Activated CD4-positive, alpha-beta T cell treated with anti-CD3 and anti-CD28 coated beads for 36 hours (primary cell): ENCODE measurements at regions of chr11 and their contacts with region 1.

Region 1: DNA sequence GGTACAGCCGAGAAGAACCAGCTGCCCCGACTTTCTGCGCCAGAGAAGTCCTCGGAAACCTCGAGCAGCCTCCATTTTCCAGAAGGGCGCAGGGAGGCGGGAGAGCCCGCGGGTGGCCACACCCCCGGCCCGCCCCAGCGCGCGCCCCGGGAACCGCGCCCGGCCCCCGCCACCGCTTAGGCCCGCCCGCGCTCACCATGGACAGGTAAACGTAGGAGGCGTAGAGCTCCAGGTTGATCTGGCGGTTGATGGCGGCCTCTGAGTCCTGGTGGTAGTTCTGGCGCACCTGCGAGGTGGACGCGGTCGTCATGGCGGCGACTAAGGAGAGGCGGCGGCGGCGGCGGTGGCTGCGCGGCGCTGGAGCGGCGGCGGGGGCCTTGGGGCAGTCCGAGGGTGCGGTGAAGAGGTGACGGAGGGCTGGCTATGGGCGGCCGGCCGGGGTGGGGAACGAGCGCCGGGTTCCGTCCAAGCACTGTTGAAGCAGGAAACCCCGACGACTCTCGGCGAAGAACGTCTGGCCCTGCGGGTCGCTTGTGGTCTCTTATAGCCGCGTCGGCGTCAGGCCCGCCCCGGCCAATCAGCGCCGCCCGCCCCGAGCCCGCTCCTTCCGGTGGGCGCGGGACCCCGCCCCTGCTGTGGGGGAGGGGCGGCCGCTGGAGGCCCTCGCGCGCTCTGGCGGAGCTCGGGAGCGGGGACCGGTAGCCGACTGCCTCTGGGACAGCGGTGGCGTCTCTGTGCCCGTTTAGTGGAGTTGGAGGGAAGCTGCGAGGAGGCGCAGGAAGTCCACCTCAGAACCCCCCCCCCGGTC is at the start of gene FTH1:
- DNase-seq: peak; percentile 93
- ATAC-seq: peak; percentile 76
- H3K4me3 Mint-ChIP-seq: peak within 1 kb of the TSS; percentile 91
- H3K27ac Mint-ChIP-seq: peak within 1 kb of the TSS; percentile 92
- H3K4me1 Mint-ChIP-seq: peaks cover 63% of the 10 kb centered on the region
- H3K27me3 Mint-ChIP-seq: no peaks in the 10 kb centered on the region
- total RNA-seq, gene FTH1: 777 to 914 TPM

Region 2: DNA sequence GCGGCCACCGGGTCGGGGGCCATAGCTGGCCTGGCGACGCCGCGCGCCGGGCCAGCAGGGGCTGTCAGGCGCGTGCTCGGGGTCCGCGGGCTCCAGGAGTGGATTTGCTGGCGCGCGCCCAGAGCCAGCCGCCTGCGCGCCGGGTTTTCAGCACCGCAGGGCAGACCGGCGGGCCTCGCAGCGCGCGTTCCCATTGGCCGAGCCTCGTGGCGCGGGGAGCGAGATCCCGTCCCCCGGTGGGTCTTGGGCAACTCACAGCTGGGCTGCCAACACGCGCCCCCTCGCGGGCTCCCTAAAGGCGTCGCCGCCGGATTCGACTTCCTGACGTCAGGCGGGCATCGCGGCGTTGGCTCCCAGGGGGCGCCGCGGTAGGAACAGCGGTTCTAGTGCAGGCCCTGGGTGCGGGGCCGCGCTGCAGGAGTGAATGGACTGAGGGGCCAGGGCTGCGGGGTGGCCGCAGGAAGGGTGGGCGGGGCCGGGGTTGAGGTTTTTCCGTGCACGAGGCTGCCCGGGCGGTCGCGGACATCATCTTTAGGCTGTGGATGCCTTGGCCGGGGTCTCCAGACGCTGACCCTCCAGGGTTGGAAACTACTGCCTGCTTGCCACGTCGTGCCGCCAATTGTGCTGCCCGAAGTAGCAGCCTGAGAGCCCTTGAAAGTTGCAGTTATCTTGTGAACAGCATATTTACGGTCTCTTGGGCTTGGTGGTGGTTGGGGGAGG is 150.4 kb before region 1 on chr11 and contains the start of gene FADS1:
- CTCF ChIA-PET with region 1: interaction called, 4 read pairs
- POLR2A ChIA-PET with region 1: no interaction called
- intact Hi-C with region 1: loop called in 1 of 2 experiments (anchors 1 kb)
- DNase-seq: peak; percentile 92
- ATAC-seq: peak; percentile 67
- H3K4me3 Mint-ChIP-seq: peak within 1 kb of the TSS; percentile 89
- H3K27ac Mint-ChIP-seq: peak within 1 kb of the TSS; percentile 80
- H3K4me1 Mint-ChIP-seq: peaks cover 7% of the 10 kb centered on the region
- H3K27me3 Mint-ChIP-seq: peaks cover 25% of the 10 kb centered on the region
- total RNA-seq, gene FADS1: 18.9 to 23.7 TPM

Region 3: GRCh38 chr11:61841636-61842527 is 125.4 kb before region 1 on chr11:
- CTCF ChIA-PET with region 1: no interaction called
- POLR2A ChIA-PET with region 1: no interaction called
- intact Hi-C with region 1: no loop called
- DNase-seq: no peak
- ATAC-seq: no peak
- H3K4me3 Mint-ChIP-seq: no peak overlapping the region
- H3K27ac Mint-ChIP-seq: no peak overlapping the region
- H3K4me1 Mint-ChIP-seq: no peaks in the 10 kb centered on the region
- H3K27me3 Mint-ChIP-seq: no peaks in the 10 kb centered on the region

Region 4: DNA sequence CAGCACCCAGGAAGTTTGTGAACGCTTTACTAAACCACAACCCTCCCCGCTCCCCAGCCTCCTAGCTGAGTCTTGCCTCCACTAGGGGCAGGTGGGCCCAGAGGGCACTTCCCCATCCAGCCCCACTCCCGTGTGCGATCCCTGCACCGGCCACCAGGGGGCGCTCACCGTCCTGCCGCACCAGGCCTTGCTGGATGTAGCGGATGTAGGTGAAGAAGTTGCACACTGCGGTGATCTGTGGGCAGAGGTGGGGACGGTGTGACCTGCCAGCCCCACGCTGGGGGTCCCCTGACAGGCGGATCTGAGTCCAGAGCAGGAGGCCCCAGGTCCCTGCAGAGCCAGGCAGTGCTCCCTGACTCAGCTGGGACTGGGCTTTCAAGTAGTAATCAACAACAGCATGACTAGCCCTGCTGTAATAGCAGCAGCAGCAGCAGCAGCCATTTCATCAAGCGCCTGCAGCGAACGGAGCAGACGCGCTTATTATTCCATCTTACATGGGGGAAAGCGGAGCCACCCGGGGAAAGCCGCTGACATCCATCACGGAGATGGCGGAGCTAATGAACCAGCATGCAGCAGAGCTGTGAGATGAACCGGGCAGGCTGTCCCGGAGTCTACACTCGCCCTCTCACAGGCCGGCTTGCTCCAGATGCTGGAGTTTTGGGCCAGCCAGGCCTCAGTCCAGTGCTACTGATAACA is 68.0 kb before region 1 on chr11:
- CTCF ChIA-PET with region 1: interaction called, 13 read pairs
- POLR2A ChIA-PET with region 1: no interaction called
- intact Hi-C with region 1: loop called in 1 of 2 experiments (anchors 5 kb)
- DNase-seq: peak; percentile 95
- ATAC-seq: peak; percentile 94
- H3K4me3 Mint-ChIP-seq: peak overlapping the region; percentile 30
- H3K27ac Mint-ChIP-seq: peak overlapping the region; percentile 55
- H3K4me1 Mint-ChIP-seq: peaks cover 3% of the 10 kb centered on the region
- H3K27me3 Mint-ChIP-seq: no peaks in the 10 kb centered on the region

Region 5: GRCh38 chr11:61923166-61924063 is 43.9 kb before region 1 on chr11:
- CTCF ChIA-PET with region 1: no interaction called
- POLR2A ChIA-PET with region 1: no interaction called
- intact Hi-C with region 1: no loop called
- DNase-seq: no peak
- ATAC-seq: no peak
- H3K4me3 Mint-ChIP-seq: no peak overlapping the region
- H3K27ac Mint-ChIP-seq: no peak overlapping the region
- H3K4me1 Mint-ChIP-seq: no peaks in the 10 kb centered on the region
- H3K27me3 Mint-ChIP-seq: peaks cover 18% of the 10 kb centered on the region

Region 6: DNA sequence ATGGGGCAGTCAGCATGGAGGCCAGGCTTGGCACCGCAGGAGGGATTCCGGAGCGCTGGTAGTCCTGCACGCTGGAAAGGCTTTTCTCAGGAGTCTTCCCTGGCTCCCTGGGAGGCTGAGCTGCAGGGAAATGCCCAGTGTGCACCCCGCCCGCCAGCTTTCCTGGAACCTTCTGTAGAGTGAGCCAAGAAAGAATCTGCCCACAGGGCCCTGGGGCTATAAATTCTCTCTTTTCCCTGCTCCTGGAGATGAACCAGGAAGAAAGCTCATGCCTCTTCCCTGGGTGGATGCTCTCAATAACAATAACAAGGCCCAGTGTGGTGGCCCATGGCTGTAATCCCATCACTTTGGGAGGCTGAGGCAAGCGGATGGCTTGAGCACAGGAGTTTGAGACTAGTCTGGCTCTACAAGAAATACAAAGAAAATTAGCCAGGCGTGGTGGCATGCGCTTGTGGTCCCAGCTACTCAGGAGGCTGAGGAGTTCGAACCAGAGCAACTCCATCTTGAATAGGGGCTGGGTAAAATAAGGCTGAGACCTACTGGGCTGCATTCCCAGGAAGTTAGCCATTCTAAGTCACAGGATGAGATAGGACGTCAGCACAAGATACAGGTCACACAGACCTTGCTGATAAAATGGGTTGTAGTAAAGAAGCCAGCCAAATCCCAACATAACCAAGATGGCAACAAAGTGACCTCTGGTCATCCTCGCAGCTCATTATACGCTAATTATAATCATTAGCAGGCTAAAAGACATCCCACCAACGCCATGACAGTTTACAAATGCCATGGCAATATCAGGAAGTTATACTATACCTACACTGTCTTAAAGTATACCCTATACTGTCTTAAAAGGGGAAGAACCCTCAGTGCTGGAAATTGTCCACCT is 46.5 kb after region 1 on chr11:
- CTCF ChIA-PET with region 1: no interaction called
- POLR2A ChIA-PET with region 1: no interaction called
- intact Hi-C with region 1: loop called in 1 of 2 experiments (anchors 5 kb)
- DNase-seq: no peak
- ATAC-seq: no peak
- H3K4me3 Mint-ChIP-seq: no peak overlapping the region
- H3K27ac Mint-ChIP-seq: no peak overlapping the region
- H3K4me1 Mint-ChIP-seq: no peaks in the 10 kb centered on the region
- H3K27me3 Mint-ChIP-seq: peaks cover 2% of the 10 kb centered on the region

Region 7: DNA sequence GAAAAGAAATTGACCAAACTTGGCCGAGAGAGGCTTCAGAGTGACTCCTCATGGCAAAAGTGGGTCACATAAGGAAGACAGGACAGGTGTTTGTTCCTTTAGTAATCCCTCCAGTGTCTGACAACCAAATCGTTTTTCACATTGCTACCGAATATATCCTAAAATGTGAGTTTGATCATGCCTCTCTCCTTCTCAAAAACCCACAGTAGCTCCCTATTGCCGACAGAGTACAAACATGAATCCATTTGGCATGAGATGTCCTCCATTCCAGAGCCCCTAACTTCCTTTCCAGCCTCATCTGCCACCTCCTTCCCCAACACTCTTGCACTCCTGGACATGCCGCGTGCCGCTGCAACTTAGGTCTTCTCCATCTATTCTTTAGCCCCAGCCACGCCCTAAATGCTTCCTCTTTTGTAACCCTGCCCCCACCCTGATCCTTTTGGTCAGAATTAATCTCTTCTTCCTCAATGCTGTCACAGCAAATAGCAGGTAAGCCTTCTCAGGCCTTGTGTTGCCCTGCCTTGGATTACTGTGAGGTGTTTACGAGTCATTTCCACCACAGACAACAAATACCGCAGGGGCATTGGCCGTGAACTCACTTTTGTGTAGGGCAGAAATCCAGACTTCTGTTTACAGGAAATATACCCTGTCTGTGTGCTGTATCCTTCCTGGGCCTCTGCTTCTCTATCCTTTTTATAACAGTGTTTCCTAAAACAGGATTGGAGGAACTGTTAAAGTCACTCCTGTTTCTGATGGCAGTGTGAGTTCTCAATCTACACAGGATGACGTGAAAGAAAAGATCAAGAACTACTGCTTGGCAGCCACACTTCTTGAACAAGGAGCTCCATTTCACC is 66.1 kb after region 1 on chr11:
- CTCF ChIA-PET with region 1: no interaction called
- POLR2A ChIA-PET with region 1: interaction called, 11 read pairs
- intact Hi-C with region 1: loop called in 1 of 2 experiments (anchors 5 kb)
- DNase-seq: no peak
- ATAC-seq: no peak
- H3K4me3 Mint-ChIP-seq: no peak overlapping the region
- H3K27ac Mint-ChIP-seq: no peak overlapping the region
- H3K4me1 Mint-ChIP-seq: peaks cover 6% of the 10 kb centered on the region
- H3K27me3 Mint-ChIP-seq: no peaks in the 10 kb centered on the region

Region 8: GRCh38 chr11:62123669-62124185 is 156.4 kb after region 1 on chr11 and contains the start of gene INCENP:
- CTCF ChIA-PET with region 1: interaction called, 3 read pairs
- POLR2A ChIA-PET with region 1: no interaction called
- intact Hi-C with region 1: loop called in 1 of 2 experiments (anchors 1 kb)
- DNase-seq: peak; percentile 97
- ATAC-seq: peak; percentile 98
- H3K4me3 Mint-ChIP-seq: peak within 1 kb of the TSS; percentile 98
- H3K27ac Mint-ChIP-seq: peak within 1 kb of the TSS; percentile 90
- H3K4me1 Mint-ChIP-seq: peaks cover 29% of the 10 kb centered on the region
- H3K27me3 Mint-ChIP-seq: no peaks in the 10 kb centered on the region
- total RNA-seq, gene INCENP: 125 to 140 TPM

Region 9: DNA sequence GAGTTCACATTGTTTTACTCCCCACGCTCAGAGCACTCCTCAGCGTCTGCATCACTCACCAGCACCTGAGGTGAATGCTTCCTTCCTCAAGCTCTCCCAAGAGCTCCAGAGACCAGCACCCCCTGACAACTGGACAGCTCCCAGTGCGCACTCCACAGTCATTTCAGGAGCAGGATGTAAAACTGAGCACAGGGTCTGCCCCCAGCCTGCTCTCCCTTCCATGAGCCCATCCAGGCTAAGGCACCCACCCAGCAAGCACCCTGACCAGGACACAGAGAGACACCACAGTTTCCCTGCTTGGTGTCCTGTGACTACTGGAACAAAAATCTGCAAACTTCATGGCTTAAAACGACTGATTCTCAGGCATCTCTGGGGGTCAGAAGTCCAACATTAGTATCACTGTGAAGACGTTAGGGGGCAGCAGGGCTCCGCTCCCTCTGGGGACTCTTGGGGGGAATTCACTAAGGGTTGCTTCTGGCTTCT is 278.0 kb after region 1 on chr11:
- CTCF ChIA-PET with region 1: no interaction called
- POLR2A ChIA-PET with region 1: no interaction called
- intact Hi-C with region 1: no loop called
- DNase-seq: peak; percentile 55
- ATAC-seq: peak; percentile 58
- H3K4me3 Mint-ChIP-seq: no peak overlapping the region
- H3K27ac Mint-ChIP-seq: no peak overlapping the region
- H3K4me1 Mint-ChIP-seq: no peaks in the 10 kb centered on the region
- H3K27me3 Mint-ChIP-seq: peaks cover 28% of the 10 kb centered on the region